ENCODE measurements at regions of chr4 and their contacts with region 1.

Region 1: DNA sequence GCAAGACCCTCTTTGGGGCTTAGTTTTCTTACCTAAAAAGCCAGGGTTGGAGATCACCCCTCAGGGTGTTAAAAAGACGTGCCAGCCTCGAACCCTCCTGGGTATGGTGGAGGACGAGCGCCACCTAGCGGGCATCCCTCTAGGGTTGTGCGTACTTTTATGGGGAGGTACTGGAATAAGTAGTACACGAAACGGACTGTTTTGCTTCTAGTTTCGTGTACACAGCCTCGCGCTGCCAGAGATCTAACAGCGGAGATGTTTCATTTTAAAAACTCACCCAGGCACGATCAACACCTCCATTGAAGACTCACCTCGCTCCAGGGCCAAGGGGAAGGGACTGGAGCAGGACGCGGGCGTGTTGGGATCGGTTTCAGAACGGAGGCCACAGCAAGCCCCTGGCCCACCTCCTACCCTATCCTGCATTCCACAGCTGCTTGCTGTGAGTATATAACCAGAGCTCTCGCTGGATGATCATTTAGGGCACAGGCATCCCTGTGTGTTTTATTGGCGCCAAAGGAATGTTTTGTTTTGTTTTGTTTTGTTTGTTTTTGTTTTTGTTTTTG is 4.8 kb upstream of the NKX3-2 start:
- DNase-seq: peak; percentile 87 to 88 (median 88)
- ATAC-seq: peak; percentile 76
- H3K4me3 ChIP-seq: peak overlapping the region; percentile 30; the same call in 1 of the 2 replicates
- H3K27ac ChIP-seq: no peak overlapping the region
- H3K4me1 ChIP-seq: peaks cover 2 to 24% of the 10 kb centered on the region in 2 experiments; a peak in 4 of 5 replicates
- H3K27me3 ChIP-seq: peaks cover 0 to 4% of the 10 kb centered on the region in 2 experiments; a peak in 1 of 5 replicates
- CTCF ChIP-seq: peak; percentile 85 to 94 (median 93)
- EP300 ChIP-seq: no peak
- POLR2A ChIP-seq: no peak
- RAD21 ChIP-seq: peak; percentile 93 to 95

Region 2: DNA sequence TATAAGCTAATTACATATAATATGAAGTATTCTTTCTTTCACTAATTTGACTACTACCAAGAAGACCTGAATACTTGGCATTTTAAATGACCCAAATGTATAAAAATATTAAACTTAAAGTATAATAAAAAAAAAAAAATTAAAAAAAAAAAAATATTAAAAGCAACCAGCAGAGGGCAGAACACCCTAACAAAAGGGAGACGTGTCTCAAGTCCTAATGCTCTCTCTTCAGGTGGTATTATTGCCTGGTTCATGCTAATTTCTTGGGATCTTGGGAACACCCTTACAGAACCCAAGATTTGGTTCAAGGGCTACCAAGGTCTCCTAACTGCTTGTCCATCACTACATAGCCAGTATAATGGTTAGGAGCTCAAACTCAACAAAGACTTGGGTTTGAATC is 819.7 kb before region 1 on chr4:
- CTCF ChIA-PET with region 1: interaction called, 6 read pairs
- POLR2A ChIA-PET with region 1: no interaction called
- in situ Hi-C with region 1: loop called (anchors 10 kb)
- intact Hi-C with region 1: loop called (anchors 1 kb)
- DNase-seq: peak; percentile 6 to 47 (median 31)
- ATAC-seq: 0 out of 3 replicates have a peak, but pooled peaks have one; percentile 42
- H3K4me3 ChIP-seq: no peak overlapping the region
- H3K27ac ChIP-seq: no peak overlapping the region
- H3K4me1 ChIP-seq: no peaks in the 10 kb centered on the region
- H3K27me3 ChIP-seq: no peaks in the 10 kb centered on the region
- CTCF ChIP-seq: peak in 2 of 3 experiments; percentile 38 to 52; a peak in 4 of 6 replicates
- EP300 ChIP-seq: no peak
- POLR2A ChIP-seq: no peak
- RAD21 ChIP-seq: peak; percentile 38 to 47

Region 3: DNA sequence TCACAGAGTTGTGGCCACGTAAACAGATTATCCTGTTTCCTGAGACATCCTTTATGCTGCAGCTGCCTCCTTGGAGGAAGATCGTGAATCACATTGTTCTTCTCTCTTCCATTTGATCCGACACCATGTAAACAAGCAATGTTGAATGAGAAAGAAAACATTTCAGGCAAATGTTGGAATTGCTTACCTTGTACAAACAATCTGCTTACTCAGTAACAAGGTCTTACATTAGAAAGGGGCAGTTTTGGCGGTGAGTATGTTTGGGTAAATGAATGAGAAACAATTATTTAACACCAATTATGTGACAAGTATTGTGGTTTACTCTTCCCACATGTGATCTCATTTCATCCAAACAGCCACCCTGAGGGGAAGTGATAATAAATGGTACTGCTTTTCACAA is 702.7 kb before region 1 on chr4:
- CTCF ChIA-PET with region 1: interaction called, 25 read pairs
- POLR2A ChIA-PET with region 1: no interaction called
- in situ Hi-C with region 1: loop called (anchors 5 kb)
- intact Hi-C with region 1: no loop called
- DNase-seq: no peak
- ATAC-seq: no peak
- H3K4me3 ChIP-seq: no peak overlapping the region
- H3K27ac ChIP-seq: no peak overlapping the region
- H3K4me1 ChIP-seq: no peaks in the 10 kb centered on the region
- H3K27me3 ChIP-seq: no peaks in the 10 kb centered on the region
- CTCF ChIP-seq: no peak
- EP300 ChIP-seq: no peak
- POLR2A ChIP-seq: no peak
- RAD21 ChIP-seq: no peak

Region 4: DNA sequence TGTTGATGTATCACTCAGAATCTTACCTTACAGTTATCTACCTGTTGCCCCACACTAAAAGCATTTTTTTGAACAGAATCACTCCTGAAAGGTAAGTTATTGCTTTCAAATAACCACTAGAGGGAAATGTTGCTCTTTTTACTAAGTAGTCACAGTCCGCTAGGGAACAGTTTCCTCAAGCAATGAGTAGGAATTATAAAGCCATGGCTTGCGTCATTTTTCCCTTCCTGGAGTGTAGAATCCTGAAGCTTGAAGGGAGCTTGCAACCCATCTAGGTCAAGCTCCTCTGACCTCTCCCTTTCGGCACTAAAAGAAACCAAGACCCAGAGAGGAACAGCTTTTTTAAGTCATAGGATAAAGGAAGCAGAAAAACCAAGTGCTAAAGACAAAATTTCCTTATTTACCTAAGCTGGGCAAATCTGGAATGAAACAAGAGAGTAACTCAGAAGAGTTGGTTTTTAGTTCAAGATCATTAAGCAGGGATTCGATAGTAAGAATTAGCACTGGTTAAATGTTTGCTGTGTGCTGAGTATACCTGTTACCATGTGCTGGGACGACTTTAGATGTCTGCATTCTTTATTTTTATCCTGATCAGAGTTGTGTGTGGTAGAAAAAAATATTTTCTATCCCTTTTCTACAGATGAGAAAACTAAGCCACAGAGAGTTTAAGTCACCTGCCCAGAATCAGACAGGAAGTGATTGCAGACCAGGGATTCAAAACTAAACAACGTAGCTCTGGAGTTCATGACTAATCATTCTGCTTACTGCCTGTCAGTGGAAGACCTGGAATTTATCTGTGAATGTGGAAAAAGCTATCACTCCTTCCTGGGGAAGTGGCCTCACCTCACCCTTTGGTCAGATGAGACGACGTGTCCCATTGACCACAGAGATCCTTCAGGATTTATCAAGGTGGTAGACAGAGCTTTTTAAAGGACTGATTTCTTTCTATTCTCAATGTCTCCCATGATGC is 696.4 kb before region 1 on chr4:
- CTCF ChIA-PET with region 1: interaction called, 25 read pairs
- POLR2A ChIA-PET with region 1: no interaction called
- in situ Hi-C with region 1: loop called (anchors 5 kb)
- intact Hi-C with region 1: loop called (anchors 1 kb)
- DNase-seq: peak in 2 of 4 experiments; percentile 18 to 37
- ATAC-seq: peak; percentile 88
- H3K4me3 ChIP-seq: no peak overlapping the region
- H3K27ac ChIP-seq: no peak overlapping the region
- H3K4me1 ChIP-seq: no peaks in the 10 kb centered on the region
- H3K27me3 ChIP-seq: no peaks in the 10 kb centered on the region
- CTCF ChIP-seq: peak; percentile 33 to 63 (median 40); a peak in 4 of 6 replicates
- EP300 ChIP-seq: no peak
- POLR2A ChIP-seq: no peak
- RAD21 ChIP-seq: peak; percentile 84

Region 5: DNA sequence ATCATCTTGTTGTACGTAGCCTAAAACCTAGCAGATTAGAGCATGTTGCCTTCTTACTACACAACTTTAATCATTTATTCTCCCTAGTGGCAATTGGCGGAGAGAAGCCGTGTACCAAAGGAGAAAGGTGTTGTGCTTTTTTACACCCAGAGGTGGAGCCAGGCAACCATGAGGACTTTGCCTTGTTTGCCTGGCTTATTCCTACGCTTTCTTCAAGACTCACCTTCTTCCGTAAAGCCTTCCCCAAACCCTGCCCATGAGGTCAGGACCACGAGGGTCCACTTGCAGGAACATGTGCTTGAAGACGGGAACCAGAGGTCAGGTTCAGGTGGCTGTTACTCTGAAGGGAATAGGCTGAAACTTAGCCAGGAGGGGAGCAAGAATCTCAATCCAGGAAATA is 355.4 kb before region 1 on chr4:
- CTCF ChIA-PET with region 1: no interaction called
- POLR2A ChIA-PET with region 1: no interaction called
- in situ Hi-C with region 1: no loop called
- intact Hi-C with region 1: loop called (anchors 1 kb)
- DNase-seq: peak in 1 of 4 experiments; percentile 6
- ATAC-seq: peak; percentile 68; the same call in 2 of the 3 replicates
- H3K4me3 ChIP-seq: no peak overlapping the region
- H3K27ac ChIP-seq: no peak overlapping the region
- H3K4me1 ChIP-seq: no peaks in the 10 kb centered on the region
- H3K27me3 ChIP-seq: no peaks in the 10 kb centered on the region
- CTCF ChIP-seq: peak; percentile 29 to 39 (median 39); a peak in 4 of 6 replicates
- EP300 ChIP-seq: no peak
- POLR2A ChIP-seq: no peak
- RAD21 ChIP-seq: peak in 1 of 2 experiments; percentile 36; a peak in 2 of 4 replicates

Region 6: DNA sequence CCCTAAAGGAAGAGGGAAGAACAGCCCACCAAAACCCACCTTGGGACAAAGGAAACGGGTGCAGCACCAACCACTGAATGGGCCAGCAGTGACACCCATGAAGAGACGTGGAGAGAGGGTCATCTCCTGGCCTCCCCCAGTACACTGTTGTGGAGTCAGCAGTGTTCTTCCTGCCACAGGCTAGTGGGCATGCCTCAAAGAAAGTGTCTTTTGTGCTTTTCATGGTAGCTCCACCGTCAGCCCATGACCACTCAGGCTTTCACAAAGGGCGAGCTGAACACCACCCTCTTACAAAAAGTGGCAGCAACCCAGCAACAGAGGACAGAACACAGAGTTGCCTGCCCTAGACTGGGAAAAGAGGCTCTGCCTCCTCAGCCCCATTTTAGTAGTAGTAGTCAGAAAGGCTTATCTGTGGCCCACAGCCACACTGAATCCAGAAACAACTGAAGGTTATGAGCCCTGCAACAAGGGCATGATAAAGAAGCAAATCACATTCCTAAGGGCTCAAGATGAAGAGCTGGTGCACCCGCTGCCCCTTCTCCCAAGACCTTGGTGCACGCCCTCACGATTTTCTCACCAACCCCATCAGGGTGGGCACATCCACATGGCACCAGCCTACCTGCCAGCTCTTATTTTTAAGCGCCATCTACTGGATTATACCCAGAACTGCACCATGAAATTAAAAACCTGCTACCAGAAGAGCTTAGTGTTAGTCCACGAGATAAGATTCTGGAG is 118.1 kb before region 1 on chr4:
- CTCF ChIA-PET with region 1: no interaction called
- POLR2A ChIA-PET with region 1: no interaction called
- in situ Hi-C with region 1: no loop called
- intact Hi-C with region 1: loop called (anchors 5 kb)
- DNase-seq: peak in 2 of 4 experiments; percentile 37 to 55
- ATAC-seq: peak; percentile 88
- H3K4me3 ChIP-seq: no peak overlapping the region
- H3K27ac ChIP-seq: peak overlapping the region; percentile 37; the same call in 2 of the 3 replicates
- H3K4me1 ChIP-seq: peaks cover 8 to 15% of the 10 kb centered on the region in 2 experiments; a peak in 3 of 5 replicates
- H3K27me3 ChIP-seq: no peaks in the 10 kb centered on the region
- CTCF ChIP-seq: peak; percentile 47 to 80 (median 57)
- EP300 ChIP-seq: no peak
- POLR2A ChIP-seq: no peak
- RAD21 ChIP-seq: peak in 1 of 2 experiments; percentile 73; a peak in 3 of 4 replicates

Region 7: GRCh38 chr4:13484122-13484748 is 64.8 kb before region 1 on chr4 and contains the start of gene RAB28:
- CTCF ChIA-PET with region 1: no interaction called
- POLR2A ChIA-PET with region 1: interaction called, 3 read pairs
- in situ Hi-C with region 1: no loop called
- intact Hi-C with region 1: loop called (anchors 5 kb)
- DNase-seq: peak; percentile 88 to 94 (median 91)
- ATAC-seq: peak; percentile 93
- H3K4me3 ChIP-seq: peak within 1 kb of the TSS; percentile 91
- H3K27ac ChIP-seq: peak within 1 kb of the TSS; percentile 99
- H3K4me1 ChIP-seq: peaks cover 0 to 5% of the 10 kb centered on the region in 2 experiments; a peak in 4 of 5 replicates
- H3K27me3 ChIP-seq: no peaks in the 10 kb centered on the region
- CTCF ChIP-seq: no peak; a peak in 1 of 6 replicates
- EP300 ChIP-seq: no peak
- POLR2A ChIP-seq: peak; percentile 68
- RAD21 ChIP-seq: no peak
- polyA plus RNA-seq, gene RAB28: 6.7 to 9.5 TPM